ENCODE measurements at regions of chr1 and their contacts with region 1.

Region 1: GRCh38 chr1:64686828-64687724 is 57.8 kb upstream of the RAVER2 start:
- DNase-seq: peak in 1 of 5 donors; percentile 41
- H3K4me3 ChIP-seq: no peak overlapping the region
- H3K27ac ChIP-seq: peak overlapping the region in 1 of 2 donors; percentile 27
- H3K4me1 ChIP-seq: peaks cover 1% of the 10 kb centered on the region
- H3K27me3 ChIP-seq: no peaks in the 10 kb centered on the region
- CTCF ChIP-seq: peak; percentile 52 to 70 (median 68)
- EP300 ChIP-seq: no peak
- POLR2A ChIP-seq: no peak

Region 2: DNA sequence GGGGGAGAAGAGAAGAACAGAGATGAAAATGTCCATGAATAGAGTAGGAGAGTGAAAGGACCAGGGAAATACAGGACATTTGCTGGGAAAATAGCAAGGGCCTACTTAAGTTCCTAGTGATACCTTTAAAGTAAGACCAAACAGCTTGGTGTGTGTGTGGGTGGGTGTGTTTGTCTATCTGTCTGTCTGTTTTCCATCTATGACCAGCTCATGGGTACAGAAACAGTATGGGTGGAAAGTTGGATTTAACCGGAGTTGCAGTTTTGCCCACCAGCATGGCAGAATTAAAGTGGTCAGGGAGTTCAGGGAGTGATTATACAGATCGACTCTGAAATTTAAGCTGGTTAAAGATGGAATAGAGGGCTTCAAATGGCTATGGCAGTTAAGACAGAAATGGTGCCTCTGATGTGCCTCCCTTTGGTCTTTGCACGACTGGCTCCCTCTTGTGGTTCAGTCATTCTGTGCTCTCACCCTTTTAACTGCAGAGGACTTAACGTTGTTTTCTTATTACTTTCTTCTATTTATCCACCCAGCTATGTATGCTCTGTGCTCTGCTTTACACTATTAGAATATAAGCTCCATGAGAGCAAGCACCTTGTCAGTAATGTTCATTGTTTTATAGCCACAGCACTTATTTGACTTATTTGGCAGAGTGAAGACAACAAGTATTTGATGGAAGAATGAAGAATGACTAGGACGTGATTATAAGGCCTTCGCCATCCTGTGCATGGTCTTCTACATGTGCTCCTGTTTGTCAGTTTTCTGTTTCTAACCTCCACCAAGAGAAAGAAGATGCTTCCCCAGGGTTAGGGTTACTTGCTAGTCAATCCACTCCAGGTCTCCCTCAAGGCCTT is 388.3 kb after region 1 on chr1:
- intact Hi-C with region 1: loop called in 1 of 4 experiments (anchors 5 kb)
- DNase-seq: peak in 3 of 5 donors; percentile 46 to 71 (median 58)
- H3K4me3 ChIP-seq: no peak overlapping the region
- H3K27ac ChIP-seq: no peak overlapping the region
- H3K4me1 ChIP-seq: no peaks in the 10 kb centered on the region
- H3K27me3 ChIP-seq: no peaks in the 10 kb centered on the region
- CTCF ChIP-seq: peak; percentile 43 to 53 (median 50)
- EP300 ChIP-seq: no peak
- POLR2A ChIP-seq: no peak

Measured in ovary (tissue), 10 donors.